Calu3 (cell line): ENCODE measurements at regions of chr2 and their contacts with region 1.

Region 1: GRCh38 chr2:137969418-137969765 is 5.1 kb downstream of the HNMT start:
- DNase-seq: peak; percentile 38
- H3K4me3 Mint-ChIP-seq: peak overlapping the region; percentile 27
- H3K27ac Mint-ChIP-seq: peak overlapping the region; percentile 92
- H3K4me1 Mint-ChIP-seq: peaks cover 51% of the 10 kb centered on the region
- H3K27me3 Mint-ChIP-seq: no peaks in the 10 kb centered on the region
- CTCF ChIP-seq: no peak

Region 2: GRCh38 chr2:138060301-138060635 is 90.9 kb after region 1 on chr2:
- CTCF ChIA-PET with region 1: no interaction called
- intact Hi-C with region 1: loop called (anchors 5 kb)
- DNase-seq: peak; percentile 72
- H3K4me3 Mint-ChIP-seq: no peak overlapping the region
- H3K27ac Mint-ChIP-seq: no peak overlapping the region
- H3K4me1 Mint-ChIP-seq: no peaks in the 10 kb centered on the region
- H3K27me3 Mint-ChIP-seq: no peaks in the 10 kb centered on the region
- CTCF ChIP-seq: no peak